Activated B cell treated with CpG ODN at 0.5 μM for 24 hours (primary cell): ENCODE measurements at regions of chr2 and their contacts with region 1.

Region 1: DNA sequence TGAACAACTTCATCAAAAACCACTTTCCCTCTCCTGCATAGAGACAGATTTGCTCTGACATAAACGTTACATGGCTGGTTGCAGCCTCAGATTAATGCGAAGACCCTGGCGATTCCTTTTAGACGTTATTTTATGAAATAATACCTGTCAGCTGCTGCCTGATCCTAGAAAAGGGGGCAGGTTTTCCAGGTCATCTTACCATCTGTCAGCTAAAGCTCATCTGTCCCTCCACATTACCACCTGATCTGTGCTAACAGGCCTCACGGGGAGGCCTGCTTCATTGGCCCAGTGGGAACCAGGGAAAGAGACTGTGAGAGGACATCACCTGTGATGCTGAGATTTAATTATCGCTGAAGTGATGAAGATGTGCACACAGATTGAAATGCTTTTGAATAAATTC is 261.0 kb downstream of the ARHGAP15 start:
- DNase-seq: no peak
- ATAC-seq: no peak
- H3K4me3 Mint-ChIP-seq: no peak overlapping the region
- H3K27ac Mint-ChIP-seq: no peak overlapping the region
- H3K4me1 Mint-ChIP-seq: no peaks in the 10 kb centered on the region
- H3K27me3 Mint-ChIP-seq: no peaks in the 10 kb centered on the region
- CTCF ChIP-seq: no peak

Region 2: GRCh38 chr2:143402451-143402850 is 12.3 kb after region 1 on chr2:
- CTCF ChIA-PET with region 1: no interaction called
- POLR2A ChIA-PET with region 1: no interaction called
- intact Hi-C with region 1: loop called (anchors 2 kb)
- DNase-seq: no peak
- ATAC-seq: no peak
- H3K4me3 Mint-ChIP-seq: no peak overlapping the region
- H3K27ac Mint-ChIP-seq: no peak overlapping the region
- H3K4me1 Mint-ChIP-seq: peaks cover 28% of the 10 kb centered on the region
- H3K27me3 Mint-ChIP-seq: no peaks in the 10 kb centered on the region
- CTCF ChIP-seq: no peak